CD4-positive, alpha-beta memory T cell (primary cell): ENCODE measurements at regions of chr13 and their contacts with region 1.

Region 1: GRCh38 chr13:27826379-27827353 is 34.4 kb downstream of the GSX1 start:
- DNase-seq: peak; percentile 51 to 65 (median 56)
- H3K4me3 ChIP-seq: no peak overlapping the region
- H3K4me3 Mint-ChIP-seq: peak overlapping the region in 3 of 8 donors; percentile 6 to 48 (median 30)
- H3K27ac ChIP-seq: no peak overlapping the region
- H3K27ac Mint-ChIP-seq: no peak overlapping the region
- H3K4me1 ChIP-seq: peaks cover 12% of the 10 kb centered on the region
- H3K4me1 Mint-ChIP-seq: peaks cover 3 to 12% (median 5%) of the 10 kb centered on the region in 4 donors
- H3K27me3 ChIP-seq: peaks cover 17% of the 10 kb centered on the region
- H3K27me3 Mint-ChIP-seq: peaks cover 37 to 58% of the 10 kb centered on the region in 2 donors

Region 2: GRCh38 chr13:26985285-26985878 is 841.3 kb before region 1 on chr13:
- CTCF ChIA-PET with region 1: interaction called, 77 read pairs
- POLR2A ChIA-PET with region 1: no interaction called
- intact Hi-C with region 1: loop called (anchors 1 kb)
- DNase-seq: peak; percentile 66 to 72 (median 70)
- H3K4me3 ChIP-seq: no peak overlapping the region
- H3K4me3 Mint-ChIP-seq: no peak overlapping the region
- H3K27ac ChIP-seq: no peak overlapping the region
- H3K27ac Mint-ChIP-seq: no peak overlapping the region
- H3K4me1 ChIP-seq: no peaks in the 10 kb centered on the region
- H3K4me1 Mint-ChIP-seq: peaks cover 0 to 2% (median 0%) of the 10 kb centered on the region in 4 donors
- H3K27me3 ChIP-seq: no peaks in the 10 kb centered on the region
- H3K27me3 Mint-ChIP-seq: peaks cover 9 to 13% of the 10 kb centered on the region in 2 donors

Region 3: GRCh38 chr13:27379694-27380641 is 446.7 kb before region 1 on chr13:
- CTCF ChIA-PET with region 1: interaction called, 283 read pairs
- POLR2A ChIA-PET with region 1: no interaction called
- intact Hi-C with region 1: loop called (anchors 1 kb)
- DNase-seq: peak in 4 of 5 donors; percentile 39 to 45 (median 40)
- H3K4me3 ChIP-seq: no peak overlapping the region
- H3K4me3 Mint-ChIP-seq: no peak overlapping the region
- H3K27ac ChIP-seq: no peak overlapping the region
- H3K27ac Mint-ChIP-seq: no peak overlapping the region
- H3K4me1 ChIP-seq: no peaks in the 10 kb centered on the region
- H3K4me1 Mint-ChIP-seq: peaks cover 0 to 5% (median under 1%) of the 10 kb centered on the region in 4 donors
- H3K27me3 ChIP-seq: no peaks in the 10 kb centered on the region
- H3K27me3 Mint-ChIP-seq: peaks cover 2 to 16% of the 10 kb centered on the region in 2 donors

Region 4: GRCh38 chr13:27449936-27450828 is 376.5 kb before region 1 on chr13 and contains the start of gene MTIF3:
- CTCF ChIA-PET with region 1: interaction called, 13 read pairs
- POLR2A ChIA-PET with region 1: interaction called, 5 read pairs
- intact Hi-C with region 1: no loop called
- DNase-seq: peak; percentile 97 to 98 (median 98)
- H3K4me3 ChIP-seq: peak within 1 kb of the TSS; percentile 53 to 94
- H3K4me3 Mint-ChIP-seq: peak within 1 kb of the TSS; percentile 92 to 97 (median 94)
- H3K27ac ChIP-seq: peak within 1 kb of the TSS; percentile 91
- H3K27ac Mint-ChIP-seq: peak within 1 kb of the TSS; percentile 95 to 99 (median 97)
- H3K4me1 ChIP-seq: peaks cover 63% of the 10 kb centered on the region
- H3K4me1 Mint-ChIP-seq: peaks cover 31 to 77% (median 56%) of the 10 kb centered on the region in 4 donors
- H3K27me3 ChIP-seq: no peaks in the 10 kb centered on the region
- H3K27me3 Mint-ChIP-seq: no peaks in the 10 kb centered on the region
- total RNA-seq, gene MTIF3: 86.4 to 92.4 TPM

Region 5: GRCh38 chr13:27556109-27556508 is 270.6 kb before region 1 on chr13:
- CTCF ChIA-PET with region 1: interaction called, 12 read pairs
- POLR2A ChIA-PET with region 1: no interaction called
- intact Hi-C with region 1: no loop called
- DNase-seq: no peak
- H3K4me3 ChIP-seq: no peak overlapping the region
- H3K4me3 Mint-ChIP-seq: no peak overlapping the region
- H3K27ac ChIP-seq: no peak overlapping the region
- H3K27ac Mint-ChIP-seq: no peak overlapping the region
- H3K4me1 ChIP-seq: peaks cover 11% of the 10 kb centered on the region
- H3K4me1 Mint-ChIP-seq: peaks cover 6 to 14% (median 11%) of the 10 kb centered on the region in 4 donors
- H3K27me3 ChIP-seq: no peaks in the 10 kb centered on the region
- H3K27me3 Mint-ChIP-seq: no peaks in the 10 kb centered on the region

Region 6: DNA sequence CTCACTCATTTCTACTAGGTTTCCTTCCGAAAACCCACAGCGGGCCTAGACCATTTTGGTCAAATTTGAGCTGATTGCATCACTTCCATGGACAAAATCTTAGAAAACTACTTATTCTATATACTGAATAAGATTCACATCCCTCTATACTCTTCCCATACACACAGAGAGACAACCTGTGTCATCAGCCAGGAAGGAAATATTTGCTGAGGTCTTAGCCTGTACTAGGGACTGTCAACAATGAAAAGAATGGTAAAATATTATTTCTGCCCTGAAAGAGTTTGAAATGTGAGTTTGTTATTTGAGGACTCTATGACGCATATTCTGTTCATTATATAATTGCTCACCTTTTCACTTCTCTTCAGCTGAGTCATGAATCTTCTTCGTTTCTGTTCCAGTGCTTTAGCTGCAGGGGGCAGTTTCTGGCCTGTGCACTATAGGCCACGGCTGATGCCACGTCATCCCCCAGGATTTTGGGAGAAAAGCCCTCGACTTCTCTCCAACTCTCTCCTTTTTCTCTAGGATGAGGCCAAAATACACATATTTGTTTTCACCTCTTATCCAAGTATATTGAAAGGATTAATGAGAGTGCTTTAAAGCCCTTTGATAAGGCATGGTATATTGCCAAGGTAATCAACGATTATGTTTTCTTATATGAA is 13.3 kb after region 1 on chr13:
- CTCF ChIA-PET with region 1: interaction called, 44 read pairs
- POLR2A ChIA-PET with region 1: no interaction called
- intact Hi-C with region 1: no loop called
- DNase-seq: no peak
- H3K4me3 ChIP-seq: no peak overlapping the region
- H3K4me3 Mint-ChIP-seq: no peak overlapping the region
- H3K27ac ChIP-seq: no peak overlapping the region
- H3K27ac Mint-ChIP-seq: no peak overlapping the region
- H3K4me1 ChIP-seq: no peaks in the 10 kb centered on the region
- H3K4me1 Mint-ChIP-seq: no peaks in the 10 kb centered on the region
- H3K27me3 ChIP-seq: no peaks in the 10 kb centered on the region
- H3K27me3 Mint-ChIP-seq: peaks cover 22 to 29% of the 10 kb centered on the region in 2 donors

Region 7: GRCh38 chr13:27977476-27978300 is 151.0 kb after region 1 on chr13:
- CTCF ChIA-PET with region 1: interaction called, 189 read pairs
- POLR2A ChIA-PET with region 1: no interaction called
- intact Hi-C with region 1: no loop called
- DNase-seq: no peak
- H3K4me3 ChIP-seq: no peak overlapping the region
- H3K4me3 Mint-ChIP-seq: peak overlapping the region in 2 of 8 donors; percentile 54 to 71
- H3K27ac ChIP-seq: no peak overlapping the region
- H3K27ac Mint-ChIP-seq: no peak overlapping the region
- H3K4me1 ChIP-seq: peaks cover 11% of the 10 kb centered on the region
- H3K4me1 Mint-ChIP-seq: peaks cover 9 to 42% (median 21%) of the 10 kb centered on the region in 4 donors
- H3K27me3 ChIP-seq: peaks cover 19% of the 10 kb centered on the region
- H3K27me3 Mint-ChIP-seq: peaks cover 68 to 74% of the 10 kb centered on the region in 2 donors